Sciatic nerve (tissue), 2 donors: ENCODE measurements at regions of chr6 and their contacts with region 1.

Region 1: DNA sequence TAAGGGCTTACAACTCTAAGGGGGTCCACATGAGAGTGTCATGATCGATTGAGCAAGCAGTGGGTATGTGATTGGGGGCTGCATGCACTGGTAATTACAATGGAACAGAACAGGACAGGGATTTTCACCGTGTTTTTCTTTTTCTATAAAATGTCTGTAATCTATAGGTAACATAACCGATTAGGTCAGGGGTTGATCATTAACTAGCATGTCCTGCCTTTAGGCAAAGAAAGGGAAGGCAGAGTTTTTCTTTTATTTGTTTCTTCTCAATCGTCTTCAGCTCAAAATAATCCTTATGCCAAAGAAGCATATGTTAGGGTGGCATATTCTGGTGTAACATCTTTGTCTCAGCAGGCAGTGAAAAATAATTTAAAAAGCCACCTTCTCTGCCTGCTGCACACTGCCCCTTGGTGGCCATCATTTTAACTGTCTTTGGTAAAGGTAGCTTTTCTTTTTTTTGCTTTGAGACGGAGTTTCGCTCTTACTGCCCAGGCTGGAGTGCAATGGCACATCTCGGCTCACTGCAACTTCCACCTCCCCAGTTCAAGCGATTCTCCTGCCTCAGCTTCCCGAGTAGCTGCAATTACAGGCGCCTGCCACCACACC is 9.7 kb upstream of the CEP43 start:
- DNase-seq: no peak
- ATAC-seq: peak; percentile 50

Region 2: DNA sequence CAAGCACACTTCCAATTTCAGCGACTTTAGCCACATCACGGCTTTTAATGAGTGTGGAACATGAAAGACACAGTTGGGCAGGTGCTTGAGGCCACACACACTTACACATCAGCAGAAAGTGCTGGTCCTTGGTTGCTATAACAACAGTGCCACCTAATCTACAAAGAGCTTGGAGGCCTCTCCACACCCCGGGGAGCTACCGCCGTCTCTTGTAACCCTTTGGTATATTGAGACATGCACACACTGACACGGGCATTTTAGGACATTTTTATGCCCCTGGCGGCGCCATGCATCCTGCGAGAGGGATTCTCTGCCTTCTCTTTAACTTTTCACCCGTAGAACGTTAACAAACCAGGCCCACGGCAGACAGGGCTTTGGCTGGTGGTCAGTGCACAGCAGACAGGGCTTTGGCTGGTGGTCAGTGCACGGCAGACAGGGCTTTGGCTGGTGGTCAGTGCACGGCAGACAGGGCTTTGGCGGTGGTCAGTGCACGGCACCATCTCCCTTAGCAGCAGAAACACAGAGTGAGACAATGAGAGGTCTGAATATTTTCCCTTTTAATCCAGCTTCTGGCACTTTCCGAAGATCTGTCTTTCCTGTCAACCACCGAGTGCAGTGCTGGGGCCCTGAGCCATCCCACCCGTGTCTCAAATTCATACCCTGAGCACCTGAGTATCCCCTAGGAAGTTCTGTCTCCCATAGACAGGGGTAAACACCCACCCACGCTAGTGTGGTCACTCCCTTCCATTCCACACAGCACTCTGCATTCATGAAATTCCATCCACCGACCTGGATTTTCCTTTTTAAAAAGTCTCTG is 245.9 kb before region 1 on chr6:
- intact Hi-C with region 1: no loop called
- DNase-seq: no peak
- ATAC-seq: no peak

Region 3: DNA sequence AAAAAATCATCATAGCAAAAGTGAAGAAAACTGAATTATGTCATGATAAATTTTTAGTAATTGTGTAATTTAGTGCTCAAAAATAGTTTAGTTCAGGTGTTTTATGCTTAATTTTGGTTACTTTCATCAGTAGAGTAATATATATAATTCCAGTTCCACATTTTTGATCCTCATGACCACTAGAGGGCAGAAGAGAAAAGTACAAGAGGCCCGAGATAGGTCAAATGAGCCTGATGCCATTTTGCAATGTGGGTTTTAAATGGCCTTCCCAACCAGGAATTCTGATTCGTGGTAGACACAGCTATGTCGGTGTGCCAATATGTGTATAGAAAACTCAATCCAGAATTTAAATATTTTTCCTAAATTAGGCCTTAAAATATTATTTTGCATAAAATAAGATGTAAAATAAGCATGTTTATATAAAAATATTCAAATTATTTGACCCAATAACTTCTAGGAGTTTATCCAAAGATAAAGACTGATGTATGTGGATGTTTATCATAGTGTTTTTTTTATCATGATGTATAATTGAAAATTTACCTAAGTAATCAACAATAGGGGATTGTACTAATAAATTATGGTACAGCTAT is 202.7 kb before region 1 on chr6:
- intact Hi-C with region 1: loop called (anchors 5 kb)
- DNase-seq: no peak
- ATAC-seq: no peak